ENCODE measurements at regions of chr2 and their contacts with region 1.

Region 1: DNA sequence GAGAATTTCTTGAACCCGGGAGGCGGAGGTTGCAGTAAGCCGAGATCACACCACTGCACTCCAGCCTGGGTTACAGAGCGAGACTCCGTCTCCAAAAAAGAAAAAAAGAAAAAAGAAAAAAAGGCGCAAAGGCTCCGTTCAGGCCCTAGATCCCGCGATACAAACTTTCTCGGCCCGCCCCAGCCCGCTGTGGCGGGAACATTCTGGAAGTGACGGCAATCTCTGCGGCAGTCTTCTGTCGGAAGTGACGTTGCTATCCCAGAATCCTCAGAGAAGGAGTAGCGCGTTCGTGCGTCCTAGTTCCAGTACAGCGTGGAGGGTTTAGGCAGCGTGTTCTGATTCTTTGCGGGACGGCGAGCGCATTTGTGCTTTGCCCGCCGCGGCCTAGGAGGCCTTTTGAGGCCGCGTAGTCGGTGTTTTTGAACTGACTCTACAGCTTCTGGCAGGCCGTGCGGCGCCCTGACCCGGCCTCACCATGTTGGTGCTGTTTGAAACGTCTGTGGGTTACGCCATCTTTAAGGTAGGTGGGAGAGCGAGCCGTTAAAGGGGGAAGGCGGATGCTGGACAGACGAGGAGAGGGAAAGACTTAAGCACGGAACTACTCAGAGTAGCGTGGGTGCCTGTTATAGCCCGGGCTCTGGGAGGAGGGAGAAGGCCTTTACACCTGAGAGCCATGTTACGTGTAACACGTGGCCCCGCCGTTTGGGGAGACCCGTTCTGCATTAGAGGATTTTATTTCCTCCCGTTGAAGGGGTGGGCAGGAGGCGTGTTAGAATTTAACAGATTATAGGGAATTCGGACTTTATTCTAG is at the start of gene NOP58:
- DNase-seq: peak; percentile 98
- H3K4me3 Mint-ChIP-seq: peak within 1 kb of the TSS; percentile 65
- H3K27ac Mint-ChIP-seq: peak within 1 kb of the TSS; percentile 80
- H3K4me1 Mint-ChIP-seq: peaks cover 19% of the 10 kb centered on the region
- H3K27me3 Mint-ChIP-seq: no peaks in the 10 kb centered on the region
- total RNA-seq, gene NOP58: 221 and 228 TPM in 2 replicates

Region 2: GRCh38 chr2:201130524-201131186 is 1135.0 kb before region 1 on chr2:
- intact Hi-C with region 1: loop called (anchors 2 kb)
- DNase-seq: peak; percentile 80
- H3K4me3 Mint-ChIP-seq: peak overlapping the region; percentile 81
- H3K27ac Mint-ChIP-seq: peak overlapping the region; percentile 100
- H3K4me1 Mint-ChIP-seq: peaks cover 51% of the 10 kb centered on the region
- H3K27me3 Mint-ChIP-seq: no peaks in the 10 kb centered on the region

Region 3: DNA sequence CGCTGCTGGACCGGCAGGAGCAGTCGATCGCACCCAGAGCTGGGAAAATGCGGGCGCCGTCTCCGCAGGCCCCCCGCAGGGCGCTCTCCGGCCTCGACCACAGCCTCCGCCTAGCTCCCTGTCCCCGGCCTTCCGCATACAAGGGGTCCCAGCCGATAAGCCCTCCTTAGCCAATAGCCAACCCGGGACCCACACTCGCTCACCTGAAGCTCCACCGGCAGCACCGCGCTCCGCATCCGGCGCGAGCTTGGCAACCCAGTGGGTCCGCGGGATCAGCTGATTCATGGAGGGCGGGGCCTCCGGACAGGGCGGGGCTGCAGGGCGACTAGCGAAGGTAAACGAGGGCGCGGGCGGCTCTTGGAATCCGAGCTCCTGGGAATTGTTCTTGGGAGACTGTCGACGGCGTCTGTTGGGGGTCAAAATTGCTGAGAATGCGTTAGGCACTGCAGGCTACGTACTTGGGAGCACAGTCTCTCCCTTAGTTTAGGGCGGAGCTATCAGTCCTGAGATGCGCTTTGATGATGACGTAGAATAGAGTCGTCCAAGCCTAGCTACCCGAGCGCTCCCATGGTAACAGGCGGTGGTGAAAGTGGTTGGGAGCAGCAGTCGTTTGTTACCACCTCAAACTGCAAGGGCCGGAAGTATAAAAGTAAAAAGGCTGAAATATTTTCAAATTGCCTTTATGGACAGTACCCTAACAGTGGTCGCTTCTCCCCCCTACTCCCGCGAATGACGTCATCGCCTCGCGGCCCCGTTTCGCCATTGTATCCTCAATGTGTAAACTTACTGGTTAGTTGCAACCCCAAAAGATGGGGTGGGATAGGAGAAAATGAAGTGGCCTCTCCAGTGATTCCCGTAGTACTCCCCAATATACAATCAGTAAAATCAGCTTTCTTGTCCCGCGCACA is 484.7 kb before region 1 on chr2 and contains the start of gene ALS2:
- intact Hi-C with region 1: loop called (anchors 5 kb)
- DNase-seq: peak; percentile 99
- H3K4me3 Mint-ChIP-seq: peak within 1 kb of the TSS; percentile 95
- H3K27ac Mint-ChIP-seq: peak within 1 kb of the TSS; percentile 92
- H3K4me1 Mint-ChIP-seq: peaks cover 22% of the 10 kb centered on the region
- H3K27me3 Mint-ChIP-seq: peaks cover 20% of the 10 kb centered on the region
- total RNA-seq, gene ALS2: 10.7 and 11.3 TPM in 2 replicates

Region 4: DNA sequence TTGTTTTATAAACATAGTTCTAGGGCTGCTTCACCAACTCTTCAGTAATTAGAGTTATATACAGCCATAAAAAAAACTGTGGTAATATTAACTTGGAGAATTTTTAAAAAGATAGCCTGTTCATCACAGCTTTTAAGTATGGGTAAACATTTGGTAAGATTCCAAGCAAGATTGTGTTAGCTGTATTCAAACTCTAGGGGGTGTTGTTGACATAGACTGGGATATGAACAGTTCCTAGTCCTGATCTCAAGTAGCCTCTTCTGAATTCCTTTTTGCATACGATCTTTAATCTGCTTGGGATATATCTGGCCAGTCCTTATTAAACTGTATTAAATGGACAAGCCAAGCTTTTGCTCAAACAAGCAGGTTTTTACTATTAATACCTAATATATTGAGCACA is 13.3 kb after region 1 on chr2:
- intact Hi-C with region 1: loop called (anchors 1 kb)
- DNase-seq: no peak
- H3K4me3 Mint-ChIP-seq: peak overlapping the region; percentile 21
- H3K27ac Mint-ChIP-seq: peak overlapping the region; percentile 62
- H3K4me1 Mint-ChIP-seq: peaks cover 35% of the 10 kb centered on the region
- H3K27me3 Mint-ChIP-seq: no peaks in the 10 kb centered on the region

Region 5: GRCh38 chr2:202307690-202308089 is 42.0 kb after region 1 on chr2:
- intact Hi-C with region 1: no loop called
- DNase-seq: no peak
- H3K4me3 Mint-ChIP-seq: no peak overlapping the region
- H3K27ac Mint-ChIP-seq: no peak overlapping the region
- H3K4me1 Mint-ChIP-seq: peaks cover 5% of the 10 kb centered on the region
- H3K27me3 Mint-ChIP-seq: no peaks in the 10 kb centered on the region